Gastrocnemius medialis (tissue), 4 donors: ENCODE measurements at regions of chr12 and their contacts with region 1.

Region 1: DNA sequence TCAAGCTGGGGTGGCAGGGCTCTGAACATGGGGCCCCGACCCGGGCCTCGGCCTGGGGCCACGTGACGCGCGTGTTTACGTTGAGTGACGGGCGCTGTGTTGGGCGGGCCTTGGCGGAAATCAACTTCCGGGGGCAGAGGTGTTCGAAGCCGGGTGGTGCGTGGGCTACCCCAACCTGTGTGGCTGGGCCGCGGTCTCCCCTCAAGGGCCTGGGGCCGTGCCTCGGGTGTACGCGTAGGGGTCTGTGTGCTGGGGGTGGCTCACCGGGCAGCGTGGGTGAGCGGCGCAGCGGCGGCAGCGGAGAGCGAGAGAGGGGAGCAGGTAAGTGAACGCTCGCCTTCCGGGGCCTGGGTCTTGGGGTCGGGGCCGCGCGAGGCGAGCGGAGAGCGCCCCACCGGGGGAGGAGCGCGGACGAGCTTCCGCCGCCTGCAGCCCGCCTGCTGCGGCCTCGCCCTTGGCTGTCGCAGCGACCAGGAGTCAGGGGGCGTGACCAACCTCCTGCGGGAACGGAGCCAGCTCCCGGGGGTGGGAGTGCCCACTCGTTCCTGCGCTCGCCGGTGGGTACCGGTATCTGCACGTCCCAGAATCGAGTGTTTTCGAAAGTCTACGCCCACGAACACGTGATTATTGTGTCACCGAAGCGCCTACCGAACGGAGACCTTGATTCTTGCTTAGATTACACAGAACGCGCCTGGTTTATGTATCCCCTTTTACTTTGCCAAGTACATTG is at the start of gene CCDC91:
- DNase-seq: peak; percentile 65 to 78
- ATAC-seq: peak; percentile 81 to 82
- H3K4me3 ChIP-seq: peak within 1 kb of the TSS; percentile 76 to 90 (median 85)
- H3K27ac ChIP-seq: peak within 1 kb of the TSS; percentile 90 to 95 (median 92)
- H3K4me1 ChIP-seq: peaks cover 7 to 16% of the 10 kb centered on the region in 2 donors
- H3K27me3 ChIP-seq: no peaks in the 10 kb centered on the region
- CTCF ChIP-seq: no peak
- POLR2A ChIP-seq: peak; percentile 54 to 55
- total RNA-seq, gene CCDC91: 22.3 to 50.6 (median 36.6) TPM

Region 2: GRCh38 chr12:26937875-26938700 is 1252.4 kb before region 1 on chr12 and contains the starts of genes FGFR1OP2 and INTS13:
- in situ Hi-C with region 1: no loop called
- intact Hi-C with region 1: loop called (anchors 5 kb)
- DNase-seq: peak; percentile 98
- ATAC-seq: peak; percentile 94
- H3K4me3 ChIP-seq: peak within 1 kb of the TSS; percentile 68 to 99 (median 90)
- H3K27ac ChIP-seq: peak within 1 kb of the TSS; percentile 94 to 97 (median 96)
- H3K4me1 ChIP-seq: peaks cover 57 to 69% of the 10 kb centered on the region in 2 donors
- H3K27me3 ChIP-seq: no peaks in the 10 kb centered on the region
- CTCF ChIP-seq: no peak
- POLR2A ChIP-seq: peak; percentile 95 to 96
- total RNA-seq, gene FGFR1OP2: 43.8 to 56.4 (median 45.9) TPM
- total RNA-seq, gene INTS13: 21.3 to 39.9 (median 32.7) TPM

Region 3: DNA sequence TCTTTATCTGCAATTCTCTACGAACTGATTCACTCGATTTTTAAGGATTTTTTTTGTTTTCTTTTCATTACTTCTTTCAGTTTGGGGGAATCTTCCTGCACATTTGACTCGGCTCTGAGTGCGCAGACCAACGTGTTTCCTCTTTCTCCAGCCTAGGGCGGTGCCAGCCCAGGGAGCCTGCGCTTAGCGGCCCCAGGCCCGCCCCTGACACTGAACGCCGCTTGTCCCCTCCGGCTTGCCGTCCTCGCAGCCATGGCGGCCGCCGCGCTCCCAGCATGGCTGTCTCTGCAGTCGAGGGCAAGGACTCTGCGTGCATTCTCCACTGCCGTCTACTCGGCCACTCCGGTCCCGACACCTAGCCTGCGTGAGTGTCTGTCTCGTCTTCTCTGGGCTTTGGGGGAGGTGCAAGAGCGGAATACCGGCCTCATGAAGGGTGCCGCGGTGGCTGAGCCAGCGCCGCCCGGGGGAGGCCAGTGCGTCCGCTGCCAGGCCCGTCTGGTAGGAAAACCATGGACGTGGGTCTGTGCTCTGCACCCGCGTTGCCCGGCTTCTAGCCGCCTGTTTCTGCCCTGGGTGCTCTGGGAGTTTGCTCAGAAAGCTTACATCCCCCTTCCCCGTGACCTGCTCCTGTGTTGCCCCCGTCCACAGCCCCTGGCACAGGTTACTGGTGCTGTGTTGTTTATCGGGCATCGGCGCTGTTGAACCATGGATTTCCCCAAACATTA is 479.7 kb before region 1 on chr12 and contains the start of gene MRPS35:
- in situ Hi-C with region 1: no loop called
- intact Hi-C with region 1: loop called (anchors 5 kb)
- DNase-seq: peak; percentile 85 to 87
- ATAC-seq: peak; percentile 95 to 96
- H3K4me3 ChIP-seq: peak within 1 kb of the TSS; percentile 82 to 98 (median 86)
- H3K27ac ChIP-seq: peak within 1 kb of the TSS; percentile 78 to 87 (median 85)
- H3K4me1 ChIP-seq: peaks cover 19 to 23% of the 10 kb centered on the region in 2 donors
- H3K27me3 ChIP-seq: no peaks in the 10 kb centered on the region
- CTCF ChIP-seq: no peak
- POLR2A ChIP-seq: peak; percentile 46 to 56
- total RNA-seq, gene MRPS35: 76.3 to 153 (median 98.2) TPM

Region 4: GRCh38 chr12:28231248-28231647 is 40.8 kb after region 1 on chr12:
- in situ Hi-C with region 1: no loop called
- intact Hi-C with region 1: loop called (anchors 2 kb)
- DNase-seq: no peak
- ATAC-seq: peak; percentile 61 to 83
- H3K4me3 ChIP-seq: no peak overlapping the region
- H3K27ac ChIP-seq: peak overlapping the region in 2 of 4 donors; percentile 5 to 16
- H3K4me1 ChIP-seq: peaks cover 18 to 21% of the 10 kb centered on the region in 2 donors
- H3K27me3 ChIP-seq: no peaks in the 10 kb centered on the region
- CTCF ChIP-seq: no peak
- POLR2A ChIP-seq: no peak

Region 5: GRCh38 chr12:28569698-28570411 is 379.4 kb after region 1 on chr12:
- in situ Hi-C with region 1: no loop called
- intact Hi-C with region 1: loop called (anchors 10 kb)
- DNase-seq: peak in 1 of 2 donors; percentile 16
- ATAC-seq: peak; percentile 55 to 85
- H3K4me3 ChIP-seq: no peak overlapping the region
- H3K27ac ChIP-seq: no peak overlapping the region
- H3K4me1 ChIP-seq: no peaks in the 10 kb centered on the region
- H3K27me3 ChIP-seq: no peaks in the 10 kb centered on the region
- CTCF ChIP-seq: no peak
- POLR2A ChIP-seq: no peak